Tibial artery (tissue), 4 donors: ENCODE measurements at regions of chr4 and their contacts with region 1.

Region 1: DNA sequence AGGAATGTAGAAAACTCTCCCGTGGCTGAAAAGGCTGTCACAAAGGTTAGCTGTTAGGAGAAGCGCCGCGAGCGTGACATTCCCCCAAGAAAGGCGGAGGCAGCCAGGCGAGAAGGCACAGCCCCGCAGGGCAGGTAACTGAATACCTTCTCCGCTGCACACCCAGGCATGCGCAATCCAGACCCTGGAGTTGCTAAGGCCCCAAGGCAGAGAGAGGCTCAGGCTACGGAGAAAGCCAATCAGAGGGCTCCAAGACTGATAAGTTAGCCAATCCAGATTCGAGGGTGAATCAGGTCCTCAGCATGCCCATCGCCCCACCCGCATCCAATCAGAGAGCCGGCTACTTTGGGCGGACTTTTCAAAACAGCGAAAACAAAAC is 485 bp upstream of the CCNG2 start:
- DNase-seq: peak; percentile 98 to 99
- H3K4me3 ChIP-seq: peak overlapping the region; percentile 86 to 99
- H3K27ac ChIP-seq: peak overlapping the region; percentile 98 to 100
- H3K4me1 ChIP-seq: peaks cover 0 to 26% (median 6%) of the 10 kb centered on the region in 4 donors
- H3K27me3 ChIP-seq: no peaks in the 10 kb centered on the region
- CTCF ChIP-seq: no peak

Region 2: DNA sequence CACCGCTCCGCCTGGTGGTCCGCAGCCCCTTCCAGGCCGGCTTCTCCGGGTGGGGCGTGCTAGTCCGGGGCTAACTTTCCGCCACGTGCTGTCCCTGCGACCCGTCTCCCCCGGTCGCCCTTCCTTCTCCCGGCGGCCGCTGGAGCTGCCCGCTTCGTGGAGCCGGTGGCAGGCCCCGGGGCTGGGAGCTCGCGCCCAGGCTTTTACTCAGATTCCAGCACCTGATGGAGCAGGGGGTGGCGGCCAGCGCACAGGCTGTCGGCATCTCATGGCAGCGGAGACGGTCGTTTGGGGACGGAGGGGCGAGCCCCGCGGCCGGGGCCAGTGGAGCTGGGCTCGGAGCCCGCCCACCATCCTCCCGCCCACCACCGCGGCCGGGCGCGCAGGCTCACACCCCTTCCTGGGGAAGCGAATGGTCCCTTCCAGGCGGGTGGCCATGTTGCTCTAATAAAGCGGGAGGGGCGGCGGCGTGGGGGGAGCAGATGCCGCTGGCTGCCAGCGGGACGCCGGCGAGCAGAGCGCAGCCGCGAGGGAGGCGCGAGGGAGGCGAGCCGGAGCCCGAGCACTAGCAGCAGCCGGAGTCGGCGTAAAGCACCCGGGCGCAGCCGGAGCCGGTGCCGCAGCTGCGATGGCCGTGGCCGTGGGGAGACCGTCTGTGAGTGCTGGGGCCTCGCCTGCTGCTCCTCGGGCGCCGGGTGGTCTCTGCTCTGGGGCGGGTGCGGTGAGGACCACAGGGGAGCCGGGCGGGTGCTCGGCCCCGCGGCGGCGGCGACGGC is 207.1 kb before region 1 on chr4 and contains the start of gene SEPTIN11:
- intact Hi-C with region 1: loop called (anchors 5 kb)
- DNase-seq: peak; percentile 95 to 96
- H3K4me3 ChIP-seq: peak within 1 kb of the TSS; percentile 79 to 81
- H3K27ac ChIP-seq: peak within 1 kb of the TSS; percentile 94 to 97
- H3K4me1 ChIP-seq: peaks cover 0 to 38% (median 16%) of the 10 kb centered on the region in 4 donors
- H3K27me3 ChIP-seq: no peaks in the 10 kb centered on the region
- CTCF ChIP-seq: no peak

Region 3: DNA sequence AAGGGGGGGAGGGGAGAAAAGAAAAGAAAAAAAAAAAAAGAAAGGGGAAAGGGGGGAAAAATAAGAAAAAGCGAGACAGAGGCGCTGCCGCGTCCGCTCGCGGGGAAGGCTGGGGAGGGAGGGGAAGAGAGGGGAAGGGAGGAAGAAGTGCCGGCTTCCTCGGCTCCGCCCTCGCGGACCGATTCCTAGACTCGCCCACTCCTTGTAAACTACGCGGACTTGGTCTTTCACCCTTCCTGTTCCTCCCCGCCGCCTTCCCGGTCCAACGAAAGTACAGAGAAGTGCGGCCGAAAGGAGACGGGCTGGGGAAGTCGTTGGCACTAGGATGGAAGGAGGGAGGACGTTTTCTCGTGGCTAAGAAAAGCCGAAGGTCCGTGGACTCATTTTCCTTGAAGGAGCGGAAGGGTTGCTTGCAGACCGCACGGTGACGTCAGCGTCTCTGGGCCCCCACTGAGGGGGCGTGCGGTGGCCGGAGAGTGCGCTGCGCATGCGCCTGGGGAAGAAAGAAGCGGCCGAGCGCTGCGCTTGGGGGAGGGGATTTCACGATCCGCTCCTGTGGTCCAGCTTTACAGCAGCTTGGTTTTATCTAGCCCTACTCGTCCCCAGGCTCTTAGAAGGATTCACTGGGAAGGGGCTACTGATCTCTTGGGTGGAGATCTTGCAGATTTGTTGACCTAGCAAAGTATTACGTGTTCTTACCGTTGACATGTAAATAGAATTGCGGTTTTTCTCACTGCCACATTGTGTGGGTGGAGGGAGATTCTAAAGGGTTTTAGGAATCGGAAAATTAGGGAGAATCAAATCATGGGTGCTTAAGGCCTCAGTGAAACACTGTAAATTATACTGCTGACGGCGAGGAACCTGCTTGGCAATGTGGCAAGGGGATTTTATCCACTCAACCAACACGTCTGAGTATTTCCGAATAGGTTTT is 80.4 kb before region 1 on chr4 and contains the start of gene CCNI:
- intact Hi-C with region 1: loop called (anchors 5 kb)
- DNase-seq: peak; percentile 94 to 97
- H3K4me3 ChIP-seq: peak within 1 kb of the TSS; percentile 77 to 100
- H3K27ac ChIP-seq: peak within 1 kb of the TSS; percentile 96 to 100
- H3K4me1 ChIP-seq: peaks cover 0 to 38% (median 12%) of the 10 kb centered on the region in 4 donors
- H3K27me3 ChIP-seq: no peaks in the 10 kb centered on the region
- CTCF ChIP-seq: peak in 1 of 2 experiments; percentile 4

Region 4: DNA sequence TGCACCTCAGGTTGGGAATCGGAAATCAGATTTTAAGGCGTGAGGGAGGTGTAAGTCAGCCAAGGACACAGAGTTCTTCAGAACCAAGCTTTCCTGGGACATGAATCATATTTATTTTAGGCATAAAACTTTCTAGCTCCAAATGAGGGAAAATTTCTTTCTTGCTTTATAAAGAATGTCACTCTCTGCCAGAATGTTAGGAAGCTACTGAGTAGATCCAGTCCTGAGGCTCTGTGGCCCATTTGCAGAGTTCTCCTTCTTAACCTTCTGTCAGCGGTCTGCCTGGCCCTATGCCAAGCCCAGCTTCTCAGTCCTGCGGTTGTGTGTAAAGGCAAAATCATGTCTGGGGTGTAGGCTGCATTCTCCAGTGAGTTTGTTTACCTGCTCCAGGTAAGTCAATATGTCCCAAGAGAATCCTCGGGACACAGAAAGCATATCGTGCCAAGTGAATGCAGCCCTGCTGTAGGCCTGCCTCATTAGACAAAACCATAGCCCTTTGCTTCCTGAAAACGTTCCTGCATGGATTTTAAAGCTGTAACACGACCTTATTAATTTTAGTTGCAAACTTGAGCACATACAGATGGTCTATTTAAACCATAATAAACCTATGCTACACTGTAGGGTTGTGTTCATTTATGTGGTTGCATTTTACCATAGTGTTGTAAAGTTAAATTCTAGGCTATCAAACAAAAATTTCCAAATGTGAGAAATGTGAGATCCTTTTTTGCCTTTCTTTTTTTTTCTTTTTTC is 51.6 kb before region 1 on chr4:
- intact Hi-C with region 1: loop called (anchors 5 kb)
- DNase-seq: peak; percentile 79 to 88
- H3K4me3 ChIP-seq: peak overlapping the region; percentile 24 to 34
- H3K27ac ChIP-seq: peak overlapping the region; percentile 80 to 81
- H3K4me1 ChIP-seq: peaks cover 0 to 30% (median 20%) of the 10 kb centered on the region in 4 donors
- H3K27me3 ChIP-seq: no peaks in the 10 kb centered on the region
- CTCF ChIP-seq: no peak

Region 5: DNA sequence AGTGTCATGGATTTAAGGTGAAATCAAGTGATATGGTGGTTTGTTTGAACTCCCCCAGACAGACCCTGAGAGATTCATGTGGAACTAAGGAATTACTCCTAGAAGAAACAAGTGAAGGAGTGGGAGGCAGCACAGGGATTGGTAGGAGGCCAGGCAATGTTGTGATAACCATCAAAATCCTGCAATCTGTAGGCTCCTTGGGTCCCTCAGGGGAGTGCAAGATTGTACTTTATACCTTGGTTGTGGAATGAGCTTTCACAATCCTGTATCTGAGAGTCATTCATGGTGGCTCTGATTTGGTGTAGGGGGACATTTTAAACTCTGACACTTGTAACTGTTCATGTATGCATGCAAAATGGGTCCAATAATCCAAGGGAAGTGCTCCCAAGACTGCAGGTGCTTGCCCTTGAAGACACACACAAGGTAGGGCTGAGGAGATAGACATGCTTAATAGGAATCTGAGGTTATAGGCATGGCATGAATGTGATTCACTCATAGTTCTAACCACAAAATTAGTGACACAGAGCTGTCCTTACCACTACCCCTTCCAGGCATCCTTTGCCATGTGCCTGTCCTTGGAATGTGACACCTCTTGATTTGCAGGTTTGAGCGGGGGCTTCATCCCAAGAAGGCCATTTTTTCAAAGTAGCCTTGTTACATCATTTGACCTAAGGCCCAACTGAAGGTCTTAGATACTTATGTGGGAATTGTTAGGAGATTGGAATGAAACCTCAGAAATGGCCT is 112.8 kb after region 1 on chr4:
- intact Hi-C with region 1: no loop called
- DNase-seq: no peak
- H3K4me3 ChIP-seq: no peak overlapping the region
- H3K27ac ChIP-seq: no peak overlapping the region
- H3K4me1 ChIP-seq: no peaks in the 10 kb centered on the region
- H3K27me3 ChIP-seq: no peaks in the 10 kb centered on the region
- CTCF ChIP-seq: no peak

Region 6: DNA sequence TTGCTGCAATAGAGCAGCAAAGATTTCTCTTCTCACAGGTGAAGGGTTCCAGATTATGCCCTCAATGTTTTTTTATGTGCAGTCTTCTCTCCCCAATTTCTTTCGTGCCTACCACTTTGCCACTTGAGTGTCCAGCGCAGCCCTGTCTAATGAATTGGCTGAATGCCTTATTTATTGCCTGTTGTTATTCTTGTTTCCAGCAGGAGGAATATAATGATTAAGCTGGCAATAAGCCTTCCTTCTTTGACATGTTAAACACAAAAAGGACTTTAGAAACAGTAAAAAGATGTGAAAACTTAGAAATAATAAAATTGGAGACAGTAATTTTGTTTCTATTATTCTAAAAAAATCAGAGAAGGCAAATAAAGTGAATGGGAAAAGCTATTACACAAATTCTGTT is 866.0 kb after region 1 on chr4:
- intact Hi-C with region 1: no loop called
- DNase-seq: no peak
- H3K4me3 ChIP-seq: no peak overlapping the region
- H3K27ac ChIP-seq: no peak overlapping the region
- H3K4me1 ChIP-seq: no peaks in the 10 kb centered on the region
- H3K27me3 ChIP-seq: no peaks in the 10 kb centered on the region
- CTCF ChIP-seq: no peak